Activated CD4-positive, alpha-beta T cell treated with anti-CD3 and anti-CD28 coated beads, Interleukin-2, amount 10 ng/mL, durations not matched to agents 24 days and 14 days (primary cell): ENCODE measurements at regions of chr5 and their contacts with region 1.

Region 1: GRCh38 chr5:126826619-126827215 is 49.8 kb downstream of the LMNB1 start:
- DNase-seq: no peak
- H3K4me3 Mint-ChIP-seq: no peak overlapping the region
- H3K27ac Mint-ChIP-seq: peak overlapping the region; percentile 16
- H3K4me1 Mint-ChIP-seq: peaks cover 11% of the 10 kb centered on the region
- H3K27me3 Mint-ChIP-seq: no peaks in the 10 kb centered on the region

Region 2: DNA sequence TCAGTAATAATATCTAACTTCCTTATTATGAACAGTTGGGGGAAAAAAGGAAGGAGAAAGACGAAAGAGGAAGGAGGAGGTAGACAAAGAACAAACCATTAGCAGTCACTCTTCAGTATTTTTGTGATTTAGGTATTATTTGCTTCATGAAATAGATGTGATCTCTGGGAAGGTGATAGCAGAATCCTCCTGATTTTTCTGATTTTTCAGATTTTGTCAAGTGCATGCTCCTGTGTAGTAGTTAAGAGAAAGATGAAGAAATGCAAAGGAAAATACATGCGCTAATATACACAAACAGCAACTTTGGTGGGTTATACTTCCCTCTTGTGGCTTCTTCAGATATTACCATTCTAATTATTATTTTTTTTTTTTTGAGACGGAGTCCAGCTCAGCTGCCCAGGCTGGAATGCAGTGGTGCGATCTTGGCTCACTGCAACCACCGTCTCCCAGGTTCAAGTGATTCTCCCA is 18.2 kb before region 1 on chr5:
- intact Hi-C with region 1: loop called (anchors 2 kb)
- DNase-seq: no peak
- H3K4me3 Mint-ChIP-seq: no peak overlapping the region
- H3K27ac Mint-ChIP-seq: peak overlapping the region; percentile 82
- H3K4me1 Mint-ChIP-seq: peaks cover 47% of the 10 kb centered on the region
- H3K27me3 Mint-ChIP-seq: no peaks in the 10 kb centered on the region

Region 3: DNA sequence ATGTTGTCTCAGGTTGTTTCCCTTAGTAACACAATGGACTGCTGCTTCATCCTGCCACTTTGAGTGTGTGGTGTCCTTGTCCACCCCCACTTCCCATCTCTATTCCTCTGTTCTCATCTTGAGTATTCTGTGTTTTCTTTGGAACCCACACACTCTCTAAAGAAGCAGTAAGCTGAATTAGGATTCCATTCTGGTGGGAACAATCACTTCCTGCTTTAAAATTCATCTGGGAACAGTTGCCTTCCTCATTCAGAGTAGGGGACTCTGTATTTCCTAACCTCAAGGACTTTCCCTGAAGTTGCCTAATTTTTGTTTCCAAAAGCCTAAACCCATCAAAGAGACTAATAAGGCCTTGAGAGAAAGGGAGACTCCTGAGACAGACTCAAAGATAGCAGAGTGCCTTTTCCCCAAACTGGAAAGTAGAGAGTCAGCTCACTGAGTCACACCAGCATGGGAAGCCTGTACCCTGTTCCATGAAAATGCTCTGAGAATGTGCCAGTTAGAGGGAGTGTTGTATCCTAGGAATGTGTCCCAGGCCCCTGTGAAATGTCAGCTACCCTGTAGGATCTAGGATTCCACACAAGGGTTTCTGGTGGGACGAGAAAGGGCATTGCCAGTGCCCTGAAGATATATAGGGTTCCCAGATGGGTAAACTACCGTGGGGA is 940.1 kb after region 1 on chr5:
- intact Hi-C with region 1: no loop called
- DNase-seq: no peak
- H3K4me3 Mint-ChIP-seq: no peak overlapping the region
- H3K27ac Mint-ChIP-seq: no peak overlapping the region
- H3K4me1 Mint-ChIP-seq: peaks cover 2% of the 10 kb centered on the region
- H3K27me3 Mint-ChIP-seq: peaks cover 21% of the 10 kb centered on the region